Right ventricle myocardium inferior (tissue), 1 donor: ENCODE measurements at regions of chr12 and their contacts with region 1.

Region 1: GRCh38 chr12:68865399-68866164 is 57.6 kb downstream of the MDM2 start:
- DNase-seq: no peak
- ATAC-seq: no peak

Region 2: DNA sequence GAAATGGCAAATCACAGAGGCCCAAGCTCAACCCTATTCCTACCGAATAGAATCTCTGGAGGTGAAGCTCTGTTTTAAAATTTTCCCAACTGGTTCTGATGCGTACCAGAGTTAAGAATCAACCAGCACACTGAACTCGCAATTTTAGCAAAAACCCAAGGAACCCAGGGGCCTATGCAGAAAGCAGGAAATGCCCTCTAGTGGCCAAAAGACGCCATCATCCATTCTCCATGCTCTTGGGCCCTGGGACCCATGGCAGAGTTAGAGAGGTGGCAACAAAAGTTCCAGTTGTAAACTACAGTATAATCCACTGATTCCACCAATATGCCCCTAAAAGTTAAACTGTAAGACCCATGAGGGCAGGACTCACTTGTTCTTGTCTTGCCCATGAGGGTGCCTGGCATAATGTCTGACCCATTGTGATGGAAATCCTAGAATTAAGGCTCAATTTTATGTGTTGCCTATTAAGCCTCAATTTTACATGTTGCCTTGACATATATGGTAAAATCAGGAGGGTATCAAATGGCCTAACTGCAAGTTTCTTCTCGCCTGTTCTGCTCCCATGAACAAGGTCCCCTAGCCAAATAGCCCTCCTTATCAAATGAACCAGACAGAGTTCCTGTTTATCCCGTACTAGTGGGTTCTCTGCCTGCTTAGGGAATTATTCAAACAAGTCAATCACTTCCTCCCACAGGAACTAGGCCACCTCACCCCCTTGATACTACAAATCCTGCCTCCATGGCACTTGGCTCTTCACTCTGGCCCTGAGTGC is 204.9 kb after region 1 on chr12:
- intact Hi-C with region 1: loop called (anchors 2 kb)
- DNase-seq: peak; percentile 55
- ATAC-seq: peak; percentile 80